ENCODE measurements at regions of chr10 and their contacts with region 1.

Region 1: GRCh38 chr10:14982744-14983143 is 23.6 kb downstream of the MEIG1 start:
- DNase-seq: no peak
- ATAC-seq: no peak
- H3K4me3 ChIP-seq: no peak overlapping the region
- H3K27ac ChIP-seq: no peak overlapping the region
- H3K4me1 ChIP-seq: no peaks in the 10 kb centered on the region; a peak in 1 of 5 replicates
- H3K27me3 ChIP-seq: peaks cover 22 to 28% of the 10 kb centered on the region in 2 experiments
- CTCF ChIP-seq: no peak
- EP300 ChIP-seq: no peak
- POLR2A ChIP-seq: no peak
- RAD21 ChIP-seq: no peak

Region 2: GRCh38 chr10:15099886-15100285 is 117.1 kb after region 1 on chr10:
- CTCF ChIA-PET with region 1: no interaction called
- POLR2A ChIA-PET with region 1: no interaction called
- in situ Hi-C with region 1: loop called (anchors 5 kb)
- intact Hi-C with region 1: no loop called
- DNase-seq: no peak
- ATAC-seq: no peak
- H3K4me3 ChIP-seq: no peak overlapping the region
- H3K27ac ChIP-seq: no peak overlapping the region
- H3K4me1 ChIP-seq: peaks cover 11 to 26% of the 10 kb centered on the region in 2 experiments; a peak in 4 of 5 replicates
- H3K27me3 ChIP-seq: no peaks in the 10 kb centered on the region
- CTCF ChIP-seq: no peak
- EP300 ChIP-seq: no peak
- POLR2A ChIP-seq: no peak
- RAD21 ChIP-seq: no peak

Region 3: DNA sequence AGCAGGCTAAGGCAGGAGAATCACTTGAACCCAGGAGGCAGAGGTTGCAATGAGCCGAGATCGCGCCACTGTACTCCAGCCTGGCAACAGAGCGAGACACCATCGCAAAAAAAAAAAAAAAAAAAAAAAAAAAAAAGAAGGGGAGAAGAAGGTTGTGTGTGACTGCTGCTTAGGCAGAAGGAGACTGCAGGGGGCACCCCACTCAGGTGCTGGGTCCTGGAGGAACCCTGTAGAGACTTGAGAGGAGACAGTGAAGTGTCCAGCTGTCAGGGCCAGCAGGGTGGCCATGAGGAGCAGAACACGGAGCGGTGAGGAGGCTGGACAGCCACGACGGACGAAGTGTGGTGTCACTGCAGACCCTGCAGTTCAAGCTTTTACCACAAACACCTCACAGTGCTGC is 284.8 kb after region 1 on chr10:
- CTCF ChIA-PET with region 1: no interaction called
- POLR2A ChIA-PET with region 1: no interaction called
- in situ Hi-C with region 1: no loop called
- intact Hi-C with region 1: no loop called
- DNase-seq: peak in 1 of 4 experiments; percentile 19
- ATAC-seq: peak; percentile 68
- H3K4me3 ChIP-seq: no peak overlapping the region
- H3K27ac ChIP-seq: no peak overlapping the region
- H3K4me1 ChIP-seq: no peaks in the 10 kb centered on the region
- H3K27me3 ChIP-seq: no peaks in the 10 kb centered on the region
- CTCF ChIP-seq: peak in 2 of 3 experiments; percentile 13 to 38; a peak in 2 of 6 replicates
- EP300 ChIP-seq: no peak
- POLR2A ChIP-seq: no peak
- RAD21 ChIP-seq: peak in 1 of 2 experiments; percentile 49; a peak in 1 of 4 replicates

Measured in K562 (cell line).